ENCODE measurements at regions of chr20 and their contacts with region 1.

Region 1: DNA sequence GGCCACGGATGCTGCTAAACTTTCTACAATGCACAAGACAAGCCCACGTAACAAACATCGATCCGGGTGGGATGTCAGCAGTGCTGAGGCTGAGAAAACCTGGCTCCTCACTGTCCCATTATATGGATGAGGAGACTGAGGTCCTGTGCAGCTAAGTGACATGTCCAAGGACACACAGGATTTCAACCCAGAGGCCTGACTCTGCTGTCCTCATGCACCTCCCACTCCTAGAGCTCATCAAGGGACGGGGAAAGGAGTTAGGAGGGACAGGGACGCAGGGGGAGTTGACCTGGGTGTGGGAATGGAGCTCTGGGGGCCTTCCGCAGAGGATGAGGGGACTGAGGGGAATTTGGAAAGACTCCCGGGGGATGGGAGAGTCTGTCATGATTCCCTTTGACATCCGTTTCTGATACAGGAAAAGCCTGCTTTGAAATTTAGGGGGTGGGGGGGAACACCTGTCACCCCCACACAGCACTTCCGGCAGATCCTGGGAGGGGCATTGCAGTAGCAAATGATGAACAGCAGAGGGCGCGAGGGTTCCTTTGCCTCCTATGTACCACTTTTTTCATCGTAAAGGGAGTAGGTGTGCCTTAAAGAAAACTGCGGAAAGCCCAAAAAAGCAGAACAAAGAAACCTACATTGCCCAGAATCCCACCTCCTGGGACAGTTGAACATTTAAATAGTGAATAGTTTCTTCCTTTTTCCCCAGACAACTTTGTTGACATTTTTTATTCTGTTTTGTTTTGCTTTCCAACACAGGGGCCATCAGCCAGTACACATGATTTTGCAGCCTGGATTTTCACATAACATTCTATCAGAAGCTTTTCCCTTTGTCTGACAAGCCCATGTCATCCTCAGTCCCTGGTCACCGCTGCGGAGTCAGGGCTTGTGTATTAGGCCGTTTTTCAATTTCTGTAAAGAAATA is 48.6 kb downstream of the SLC2A10 start:
- DNase-seq: peak; percentile 60
- H3K4me3 ChIP-seq: no peak overlapping the region
- H3K27ac ChIP-seq: no peak overlapping the region
- H3K4me1 ChIP-seq: no peaks in the 10 kb centered on the region
- H3K27me3 ChIP-seq: no peaks in the 10 kb centered on the region
- CTCF ChIP-seq: peak; percentile 89

Region 2: DNA sequence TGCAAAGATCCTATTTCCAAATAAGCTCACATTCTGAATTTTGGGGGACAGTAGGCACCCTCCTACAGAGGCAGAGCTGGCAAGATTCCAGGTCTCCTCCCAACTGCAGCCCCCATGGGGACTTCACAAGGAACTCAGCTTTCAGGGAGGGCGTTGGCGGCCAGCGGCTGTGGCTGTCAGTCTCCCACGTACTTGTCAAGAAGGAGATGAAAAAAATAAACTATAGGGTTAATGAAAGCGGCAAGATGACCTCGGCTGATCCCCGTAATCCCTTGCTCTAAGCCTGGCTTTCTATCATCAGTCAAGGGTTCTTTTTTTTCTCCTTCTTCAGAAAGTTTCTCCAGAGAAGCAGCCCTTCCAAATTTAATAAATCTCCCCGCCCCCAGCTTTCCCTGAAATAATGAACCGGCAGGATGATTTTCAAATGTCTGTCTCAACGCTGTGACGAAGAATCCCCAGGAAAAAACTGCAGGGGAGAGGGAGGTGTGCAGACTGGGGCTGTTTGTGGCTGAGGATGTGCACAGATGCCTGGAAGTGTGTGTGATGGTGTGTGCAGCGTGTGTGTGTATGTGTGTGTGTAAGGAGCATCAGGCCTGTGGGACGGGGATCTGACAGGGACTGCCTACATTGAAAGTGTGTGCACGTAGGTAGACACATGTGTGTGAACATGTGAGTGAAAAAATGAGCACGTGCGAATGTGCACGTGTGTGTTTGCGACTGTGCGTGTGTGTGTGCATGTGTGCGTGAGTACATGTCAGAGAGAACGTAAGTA is 30.2 kb after region 1 on chr20:
- CTCF ChIA-PET with region 1: no interaction called
- POLR2A ChIA-PET with region 1: no interaction called
- intact Hi-C with region 1: loop called (anchors 2 kb)
- DNase-seq: peak; percentile 3
- H3K4me3 ChIP-seq: no peak overlapping the region
- H3K27ac ChIP-seq: no peak overlapping the region
- H3K4me1 ChIP-seq: no peaks in the 10 kb centered on the region
- H3K27me3 ChIP-seq: peaks cover 15% of the 10 kb centered on the region
- CTCF ChIP-seq: no peak

Region 3: DNA sequence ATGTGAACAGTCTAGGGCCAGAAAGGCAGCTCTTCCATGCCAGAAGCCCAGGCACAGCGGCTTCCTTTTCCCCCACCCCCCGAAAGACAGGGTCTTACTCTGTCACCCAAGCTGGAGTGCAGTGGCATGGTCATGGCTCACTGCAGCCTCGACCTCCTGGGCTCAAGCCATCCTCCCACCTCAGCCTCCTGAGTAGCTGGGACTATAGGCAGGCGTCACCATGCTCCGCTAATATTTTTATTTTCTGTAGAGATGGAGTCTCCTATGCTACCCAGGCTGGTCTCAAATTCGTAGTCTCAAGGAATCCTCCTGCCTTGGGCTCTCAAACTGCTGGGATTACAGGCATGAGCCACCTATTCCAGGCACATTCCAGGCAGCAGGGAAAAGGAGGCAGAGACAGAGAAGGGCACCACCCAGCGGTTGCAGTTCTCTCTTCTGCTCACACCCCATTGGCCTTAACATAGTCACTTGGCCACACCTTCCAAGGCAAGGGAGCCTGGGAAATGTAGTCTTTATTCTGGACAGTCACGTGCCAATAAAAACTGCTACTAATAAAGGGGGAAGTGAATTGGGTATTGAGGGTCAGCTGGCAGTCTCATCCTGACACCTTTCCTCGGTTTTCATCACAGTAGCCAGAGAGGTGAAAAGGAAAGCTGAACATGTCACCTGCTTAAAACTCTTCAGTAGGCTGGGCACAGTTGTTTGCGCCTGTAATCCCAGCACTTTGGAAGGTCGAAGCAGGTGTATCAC is 392.6 kb after region 1 on chr20:
- CTCF ChIA-PET with region 1: no interaction called
- POLR2A ChIA-PET with region 1: no interaction called
- intact Hi-C with region 1: loop called (anchors 2 kb)
- DNase-seq: peak; percentile 85
- H3K4me3 ChIP-seq: no peak overlapping the region
- H3K27ac ChIP-seq: no peak overlapping the region
- H3K4me1 ChIP-seq: no peaks in the 10 kb centered on the region
- H3K27me3 ChIP-seq: no peaks in the 10 kb centered on the region
- CTCF ChIP-seq: peak; percentile 82

Measured in A673 (cell line).